Psoas muscle (tissue), 8 donors: ENCODE measurements at regions of chr3 and their contacts with region 1.

Region 1: DNA sequence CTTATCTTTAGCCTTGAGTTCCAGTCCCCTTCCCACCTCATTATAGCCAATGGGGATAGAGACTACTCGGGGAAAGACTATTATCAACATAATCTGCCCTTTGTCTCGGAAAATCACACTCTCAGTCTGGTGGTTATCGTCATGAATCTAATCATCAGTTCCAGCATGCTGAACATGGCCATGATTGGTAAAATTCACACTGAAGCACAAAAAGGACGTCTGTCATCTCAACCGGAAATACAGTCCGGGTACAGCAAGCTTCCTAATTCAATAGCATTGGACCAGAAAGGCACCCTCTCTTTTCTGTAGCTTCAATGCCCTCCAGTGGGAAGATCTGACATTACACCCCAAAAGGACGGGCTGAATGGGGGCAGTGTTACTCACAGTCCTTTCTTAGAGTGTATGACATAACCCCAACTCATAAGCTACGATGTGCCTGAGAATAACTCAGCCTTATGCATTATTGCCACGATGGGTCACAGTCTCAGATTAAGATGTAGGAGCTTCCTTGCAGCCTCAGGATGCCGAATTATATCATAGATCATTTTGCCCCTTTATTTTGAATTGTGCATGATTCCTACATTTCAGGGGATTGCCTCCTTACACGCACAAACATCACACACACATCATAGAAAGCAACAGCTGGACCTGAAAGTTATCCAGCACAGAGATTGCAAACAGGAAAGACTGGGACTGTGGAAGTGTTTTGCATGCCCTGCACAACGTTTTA is 390.4 kb upstream of the LMCD1 start:
- DNase-seq: no peak
- ATAC-seq: peak; percentile 75 to 96 (median 93)
- H3K4me3 ChIP-seq: no peak overlapping the region
- H3K27ac ChIP-seq: no peak overlapping the region
- H3K4me1 ChIP-seq: no peaks in the 10 kb centered on the region
- H3K27me3 ChIP-seq: no peaks in the 10 kb centered on the region
- CTCF ChIP-seq: peak; percentile 57

Region 2: GRCh38 chr3:8416965-8417364 is 305.7 kb after region 1 on chr3:
- intact Hi-C with region 1: loop called in 1 of 2 experiments (anchors 10 kb)
- DNase-seq: peak in 1 of 2 donors; percentile 20
- ATAC-seq: peak in 3 of 4 donors; percentile 51 to 83 (median 76)
- H3K4me3 ChIP-seq: peak overlapping the region; percentile 44
- H3K27ac ChIP-seq: no peak overlapping the region
- H3K4me1 ChIP-seq: no peaks in the 10 kb centered on the region
- H3K27me3 ChIP-seq: no peaks in the 10 kb centered on the region
- CTCF ChIP-seq: no peak